Right ventricle myocardium inferior (tissue), 1 donor: ENCODE measurements at regions of chr12 and their contacts with region 1.

Region 1: DNA sequence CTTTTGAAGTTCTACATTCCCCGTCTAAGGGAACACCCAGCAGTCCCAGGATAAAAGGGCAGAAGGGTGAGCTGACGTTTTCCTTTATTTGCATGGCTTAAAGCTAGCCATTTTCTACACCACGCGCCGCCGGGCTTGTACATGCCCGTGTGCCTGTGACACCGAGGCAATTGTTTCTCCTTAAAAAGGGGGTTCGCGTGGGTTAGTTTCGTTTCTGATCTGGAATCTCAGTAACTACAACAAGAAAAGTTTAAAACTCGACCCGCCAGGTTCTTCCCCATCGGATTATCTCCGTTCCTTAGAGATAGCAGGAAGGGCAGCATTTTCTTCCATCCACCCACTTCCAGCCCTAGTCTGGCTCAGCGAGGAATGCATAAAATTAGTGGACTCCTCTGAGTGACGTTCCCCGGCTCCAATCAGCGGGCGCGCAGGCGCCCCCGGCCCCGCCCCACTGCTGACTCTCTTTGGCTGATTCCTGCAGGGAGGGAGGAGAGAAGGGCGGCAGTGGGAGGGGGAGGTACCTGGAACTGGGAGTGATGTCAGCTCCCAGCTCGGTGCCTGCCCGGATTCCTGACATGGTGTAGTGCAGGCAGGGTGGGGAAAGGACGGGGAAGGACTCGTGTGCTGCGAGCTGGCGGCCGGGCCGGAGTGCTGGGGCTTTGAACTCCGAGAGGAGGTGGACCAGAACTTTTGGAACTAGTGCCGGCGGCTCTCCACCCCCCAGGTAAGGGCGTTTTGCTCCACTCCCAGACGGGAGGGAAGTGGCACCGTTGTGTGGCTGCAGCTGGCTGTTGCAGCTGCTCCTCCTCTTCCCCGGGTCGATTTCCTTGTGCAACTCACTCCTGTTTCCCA is at the start of gene PPFIBP1:
- DNase-seq: peak; percentile 98
- ATAC-seq: peak; percentile 97
- total RNA-seq, gene PPFIBP1: 330 TPM

Region 2: DNA sequence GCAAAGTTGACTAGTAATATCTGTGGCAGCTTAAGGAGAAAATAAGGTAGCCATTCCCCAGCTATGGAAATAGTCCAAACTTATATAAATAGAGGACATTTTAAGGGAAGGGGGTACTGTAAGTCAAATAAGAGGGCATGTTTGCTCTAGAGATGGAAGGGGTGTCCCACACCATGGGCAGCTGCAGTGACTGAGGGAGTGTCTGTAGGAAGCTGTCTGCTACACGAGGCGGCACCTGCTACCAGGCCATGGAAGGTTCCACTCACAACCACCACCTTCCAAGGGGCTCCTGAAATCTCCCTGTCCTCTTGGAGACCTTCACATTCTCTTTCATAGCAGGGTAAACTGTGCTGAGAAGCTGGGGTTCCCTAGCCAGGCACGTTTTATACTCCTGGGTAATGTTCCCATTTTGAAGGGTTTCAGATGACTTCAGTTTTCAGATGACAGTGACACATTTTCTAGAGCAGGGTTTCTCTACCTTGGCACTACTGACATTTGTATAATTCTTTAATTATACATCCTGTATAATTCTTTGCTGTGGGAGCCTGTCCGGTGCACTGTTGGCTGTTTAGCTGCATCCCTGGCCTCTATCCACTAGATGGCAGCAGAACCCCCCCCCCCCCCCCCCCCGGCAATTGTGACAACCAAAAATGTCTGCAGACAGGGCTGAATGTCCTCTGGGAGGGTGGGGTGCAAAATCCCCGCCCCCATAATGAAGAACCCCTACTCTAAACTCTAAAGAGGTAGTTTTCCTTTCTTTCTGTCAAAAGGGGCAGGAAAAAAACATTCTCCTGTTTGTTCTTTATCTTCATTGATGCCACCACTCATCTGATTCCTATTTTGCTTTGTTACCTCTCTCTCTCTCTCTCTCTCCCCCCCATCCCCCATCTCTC is 88.9 kb before region 1 on chr12:
- intact Hi-C with region 1: loop called (anchors 2 kb)
- DNase-seq: no peak
- ATAC-seq: peak; percentile 47

Region 3: DNA sequence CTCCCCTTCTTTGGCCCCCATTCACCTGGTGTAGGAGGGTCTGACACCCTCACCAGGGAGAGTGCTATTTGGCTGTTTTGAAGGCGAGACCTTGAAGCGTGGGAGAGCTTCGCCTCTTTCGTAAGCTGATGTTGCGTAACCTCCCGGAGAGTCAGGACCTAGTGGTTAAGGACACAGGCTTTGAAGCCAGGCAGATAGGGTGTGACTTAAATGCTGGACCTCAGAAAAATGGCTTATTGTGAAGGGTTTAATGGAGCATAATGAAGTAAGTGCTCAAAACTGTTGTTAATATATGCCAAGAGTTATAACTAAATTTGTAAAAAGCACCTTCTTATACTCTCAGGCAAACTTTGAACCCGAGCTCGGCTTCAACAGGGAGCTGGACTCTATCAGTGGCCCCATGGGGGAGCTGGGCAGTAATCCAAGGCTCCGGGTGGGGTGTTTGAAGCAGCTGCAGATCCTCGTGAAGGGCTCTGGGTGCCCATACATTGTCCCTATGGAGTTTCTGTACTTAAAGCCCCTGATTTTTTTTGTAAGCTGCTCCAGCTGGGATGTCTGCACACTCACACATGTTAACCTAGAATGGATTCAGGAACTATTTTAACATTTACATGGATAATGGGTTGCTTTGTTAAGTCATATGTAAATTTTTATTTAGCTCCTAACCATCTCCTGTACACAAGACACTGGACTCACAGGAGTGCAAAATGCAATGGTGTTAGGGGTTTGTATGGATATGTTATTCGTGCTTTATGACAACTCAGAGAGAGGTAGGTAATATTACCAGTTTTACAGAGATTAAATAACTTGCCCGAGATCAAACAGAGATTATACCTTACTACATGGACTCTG is 26.2 kb after region 1 on chr12:
- intact Hi-C with region 1: loop called (anchors 2 kb)
- DNase-seq: peak; percentile 85
- ATAC-seq: peak; percentile 88

Region 4: GRCh38 chr12:27564612-27565213 is 40.8 kb after region 1 on chr12:
- intact Hi-C with region 1: loop called (anchors 5 kb)
- DNase-seq: no peak
- ATAC-seq: no peak

Region 5: GRCh38 chr12:27595231-27595642 is 71.4 kb after region 1 on chr12:
- intact Hi-C with region 1: loop called (anchors 5 kb)
- DNase-seq: peak; percentile 69
- ATAC-seq: peak; percentile 73

Region 6: DNA sequence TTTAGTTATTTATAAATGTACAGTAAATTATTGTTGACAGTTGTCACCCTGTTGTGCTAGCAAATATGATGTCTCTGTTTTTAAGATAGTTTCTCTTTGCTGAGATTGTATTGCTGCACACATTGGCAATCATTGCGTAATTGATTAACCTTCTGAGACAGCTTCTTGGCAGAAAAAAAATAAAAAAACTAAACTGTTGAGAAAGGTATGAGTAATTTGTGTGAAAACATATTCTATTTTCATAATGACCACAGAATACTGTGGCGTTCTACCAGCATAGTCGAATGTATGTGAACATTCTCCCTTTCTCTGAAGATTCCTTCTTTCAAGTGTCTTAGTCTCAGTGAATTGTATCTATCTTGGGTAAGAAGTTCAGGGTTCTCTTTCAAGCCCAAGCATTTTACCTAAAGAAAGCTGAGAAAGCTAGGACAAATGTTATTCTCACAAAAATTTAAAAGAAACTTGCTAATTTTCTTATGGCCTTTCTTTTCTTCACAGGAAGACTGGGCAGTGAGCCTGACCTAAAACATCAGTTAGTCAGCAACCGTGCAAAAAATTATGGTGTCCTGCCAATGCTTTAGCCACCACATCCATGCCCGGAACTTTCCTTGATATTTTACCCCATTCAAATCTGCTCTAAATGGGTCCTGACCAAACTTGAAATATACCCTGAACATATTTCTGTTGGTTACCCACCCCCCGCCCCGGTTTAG is 103.4 kb after region 1 on chr12:
- intact Hi-C with region 1: loop called (anchors 5 kb)
- DNase-seq: no peak
- ATAC-seq: peak; percentile 44

Region 7: DNA sequence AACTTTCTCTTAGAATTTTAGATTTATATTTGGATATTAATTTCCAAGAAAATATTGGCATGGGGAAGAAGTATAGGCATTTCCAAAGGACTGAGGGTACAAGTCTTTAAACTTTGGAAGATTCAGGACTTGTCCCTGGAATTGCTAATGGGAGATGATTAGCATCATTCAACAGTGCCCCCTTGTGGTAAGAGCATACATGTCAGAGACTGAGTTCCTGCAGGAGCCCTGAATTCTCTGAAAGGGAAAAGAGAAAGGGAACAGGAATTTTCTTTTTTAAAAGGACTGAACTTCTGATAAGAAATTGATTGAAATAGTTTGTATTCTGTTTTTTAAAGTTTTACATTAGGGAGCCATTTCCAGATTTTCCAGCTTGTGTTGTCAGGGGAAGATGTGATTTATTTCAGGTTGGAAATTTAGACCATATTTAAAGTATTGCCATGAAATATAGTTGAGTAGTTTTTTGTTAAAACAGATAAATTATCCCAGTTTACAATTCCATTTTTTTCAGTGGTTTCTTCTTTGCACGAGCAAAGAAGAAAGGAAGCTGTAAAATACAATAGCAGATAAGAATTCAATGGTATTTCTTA is 128.4 kb after region 1 on chr12:
- intact Hi-C with region 1: loop called (anchors 2 kb)
- DNase-seq: no peak
- ATAC-seq: peak; percentile 80